WTC11 (cell line): ENCODE measurements at regions of chr7 and their contacts with region 1.

Region 1: GRCh38 chr7:45229156-45229920 is 71.7 kb downstream of the RAMP3 start:
- DNase-seq: no peak
- ATAC-seq: peak; percentile 57
- H3K4me3 Mint-ChIP-seq: no peak overlapping the region
- H3K27ac Mint-ChIP-seq: no peak overlapping the region
- H3K4me1 Mint-ChIP-seq: peaks cover 7% of the 10 kb centered on the region
- H3K27me3 Mint-ChIP-seq: no peaks in the 10 kb centered on the region; the same call in 1 of the 2 replicates
- CTCF ChIP-seq: no peak

Region 2: DNA sequence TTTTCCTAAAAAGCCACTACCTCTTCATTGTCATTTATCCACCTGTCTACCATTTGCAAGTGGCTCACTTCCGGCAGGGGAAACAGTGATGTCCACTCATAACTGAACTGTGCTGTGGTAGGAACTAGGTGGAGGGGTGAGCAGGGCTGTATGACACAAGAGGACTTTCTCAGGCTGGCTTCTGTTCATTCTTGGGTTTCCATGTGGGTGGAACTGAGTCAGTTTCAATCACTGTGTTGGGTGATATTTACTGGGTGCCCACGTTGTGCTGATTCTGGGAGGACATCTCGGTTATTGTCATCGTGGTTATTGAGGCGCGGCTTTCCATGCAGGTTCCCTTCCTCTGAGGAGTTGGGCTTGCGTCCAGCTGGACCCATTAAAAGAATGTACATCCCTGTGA is 33.0 kb before region 1 on chr7:
- CTCF ChIA-PET with region 1: no interaction called
- POLR2A ChIA-PET with region 1: no interaction called
- DNase-seq: no peak
- ATAC-seq: no peak
- H3K4me3 Mint-ChIP-seq: no peak overlapping the region
- H3K27ac Mint-ChIP-seq: no peak overlapping the region
- H3K4me1 Mint-ChIP-seq: no peaks in the 10 kb centered on the region
- H3K27me3 Mint-ChIP-seq: peaks cover 2% of the 10 kb centered on the region; the same call in 1 of the 2 replicates
- CTCF ChIP-seq: no peak

Region 3: DNA sequence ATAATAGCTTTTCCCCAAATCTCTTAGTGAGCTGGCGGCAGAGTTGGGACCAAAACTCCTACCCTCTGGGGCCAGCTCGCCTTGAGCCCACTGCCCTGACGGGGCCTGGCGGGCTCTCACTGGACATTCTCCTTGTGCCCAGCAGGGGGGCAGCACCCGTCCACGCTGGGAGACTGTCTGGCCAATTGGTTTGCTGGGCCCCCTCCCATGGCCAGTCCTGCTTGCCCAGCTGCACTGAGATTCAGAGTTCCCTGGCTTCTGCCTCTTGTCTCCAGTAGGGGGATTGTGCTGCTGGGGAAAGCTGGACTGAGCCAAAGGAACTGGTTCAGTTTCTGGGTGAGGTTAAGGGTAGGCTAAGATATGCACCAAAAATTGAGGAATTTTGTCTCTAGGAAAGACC is 12.0 kb before region 1 on chr7:
- CTCF ChIA-PET with region 1: interaction called, 12 read pairs
- POLR2A ChIA-PET with region 1: no interaction called
- DNase-seq: peak; percentile 29
- ATAC-seq: peak; percentile 62
- H3K4me3 Mint-ChIP-seq: no peak overlapping the region
- H3K27ac Mint-ChIP-seq: no peak overlapping the region
- H3K4me1 Mint-ChIP-seq: peaks cover 18% of the 10 kb centered on the region
- H3K27me3 Mint-ChIP-seq: no peaks in the 10 kb centered on the region
- CTCF ChIP-seq: no peak

Region 4: DNA sequence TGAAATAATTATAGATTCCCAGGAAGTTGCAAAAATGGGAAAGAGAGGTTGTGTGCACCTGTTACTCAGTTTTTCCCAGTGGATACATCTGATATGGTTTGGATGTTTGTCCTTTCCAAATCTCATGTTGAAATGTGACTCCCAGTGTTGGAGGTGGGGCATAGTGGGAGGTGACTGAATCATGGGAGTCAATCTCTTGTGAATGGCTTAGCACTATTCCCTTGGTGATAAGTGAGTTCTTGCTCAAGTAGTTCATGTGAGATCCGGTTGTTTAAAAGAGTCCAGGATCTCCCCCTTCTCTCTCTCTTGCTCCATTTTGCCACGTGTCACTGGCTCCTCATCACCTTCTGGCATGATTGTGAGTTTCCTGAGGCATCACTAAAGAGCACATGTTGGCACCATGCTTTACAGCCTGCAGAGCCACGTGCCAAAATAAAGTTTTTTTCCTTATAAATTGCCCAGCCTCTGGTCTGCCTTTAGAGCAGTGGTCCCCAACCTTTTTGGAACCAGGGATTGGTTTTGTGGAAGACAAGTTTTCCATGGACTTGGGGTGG is 77.5 kb after region 1 on chr7:
- CTCF ChIA-PET with region 1: no interaction called
- POLR2A ChIA-PET with region 1: no interaction called
- DNase-seq: no peak
- ATAC-seq: no peak
- H3K4me3 Mint-ChIP-seq: no peak overlapping the region
- H3K27ac Mint-ChIP-seq: no peak overlapping the region
- H3K4me1 Mint-ChIP-seq: no peaks in the 10 kb centered on the region
- H3K27me3 Mint-ChIP-seq: no peaks in the 10 kb centered on the region
- CTCF ChIP-seq: no peak